A549 (cell line): ENCODE measurements at regions of chr1 and their contacts with region 1.

Region 1: DNA sequence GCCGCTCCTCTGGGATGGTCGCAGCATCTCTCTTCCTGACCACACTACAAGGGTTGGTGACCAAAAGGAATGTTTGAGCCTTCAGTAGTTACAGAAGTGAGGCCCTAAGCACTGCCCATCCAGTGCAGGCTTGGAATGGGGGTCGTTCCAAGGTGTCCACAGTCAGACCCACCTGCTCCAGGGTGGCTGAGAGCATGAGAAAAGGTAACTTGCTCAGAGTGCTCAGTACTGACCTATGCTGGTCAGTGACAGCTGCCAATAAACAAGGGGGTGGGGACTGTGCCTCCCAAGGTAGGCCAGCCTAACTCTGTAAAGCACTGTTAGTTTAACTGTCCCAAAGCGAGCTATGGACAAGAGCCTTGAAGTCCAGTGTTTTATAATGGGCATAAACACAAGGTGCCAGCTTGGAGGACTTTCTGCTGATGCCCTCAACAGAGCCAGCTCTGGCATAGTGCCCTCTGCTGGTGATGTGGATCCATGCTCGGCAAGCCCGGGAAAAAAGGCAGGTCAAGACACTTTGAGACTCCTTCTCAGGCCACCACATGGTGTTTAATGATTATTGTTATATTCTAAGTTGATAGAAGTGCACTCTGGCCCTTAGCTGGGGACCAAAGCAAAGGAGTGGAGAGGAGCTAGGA is 78.1 kb upstream of the DNAH14 start:
- DNase-seq: peak; percentile 52 to 55
- ATAC-seq: peak; percentile 72 to 90
- H3K4me3 ChIP-seq: no peak overlapping the region
- H3K27ac ChIP-seq: no peak overlapping the region
- H3K4me1 ChIP-seq: no peaks in the 10 kb centered on the region
- CTCF ChIP-seq: peak; percentile 65
- EP300 ChIP-seq: no peak
- POLR2A ChIP-seq: no peak
- RAD21 ChIP-seq: peak; percentile 37 to 49; a peak in 4 of 5 replicates

Region 2: GRCh38 chr1:224801761-224802490 is 49.4 kb before region 1 on chr1:
- CTCF ChIA-PET with region 1: interaction called, 11 read pairs
- POLR2A ChIA-PET with region 1: no interaction called
- DNase-seq: no peak
- ATAC-seq: no peak
- H3K4me3 ChIP-seq: no peak overlapping the region
- H3K27ac ChIP-seq: no peak overlapping the region
- H3K4me1 ChIP-seq: no peaks in the 10 kb centered on the region
- CTCF ChIP-seq: no peak
- EP300 ChIP-seq: no peak
- POLR2A ChIP-seq: no peak
- RAD21 ChIP-seq: no peak

Region 3: DNA sequence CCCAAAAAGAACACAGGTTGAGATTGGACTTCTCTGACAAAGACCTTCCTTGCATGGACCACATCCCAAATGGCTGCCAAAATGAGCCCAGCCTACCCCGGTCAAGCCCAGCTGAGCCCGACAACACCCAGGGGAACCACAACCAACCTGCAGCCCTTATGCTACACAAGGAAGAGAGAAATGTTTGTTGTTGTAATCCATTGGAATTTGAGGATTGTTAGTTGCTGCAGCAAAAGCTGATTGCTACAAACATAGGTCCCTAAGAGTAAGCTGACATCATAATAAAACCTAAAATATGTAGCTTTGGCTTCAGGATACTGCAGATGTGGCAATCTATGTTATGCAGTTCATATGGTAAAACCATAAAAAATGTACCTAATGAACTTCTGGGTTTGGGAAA is 12.6 kb after region 1 on chr1:
- CTCF ChIA-PET with region 1: interaction called, 22 read pairs
- POLR2A ChIA-PET with region 1: no interaction called
- DNase-seq: no peak
- ATAC-seq: no peak
- H3K4me3 ChIP-seq: no peak overlapping the region
- H3K27ac ChIP-seq: no peak overlapping the region
- H3K4me1 ChIP-seq: no peaks in the 10 kb centered on the region
- CTCF ChIP-seq: no peak
- EP300 ChIP-seq: no peak
- POLR2A ChIP-seq: no peak
- RAD21 ChIP-seq: no peak

Region 4: DNA sequence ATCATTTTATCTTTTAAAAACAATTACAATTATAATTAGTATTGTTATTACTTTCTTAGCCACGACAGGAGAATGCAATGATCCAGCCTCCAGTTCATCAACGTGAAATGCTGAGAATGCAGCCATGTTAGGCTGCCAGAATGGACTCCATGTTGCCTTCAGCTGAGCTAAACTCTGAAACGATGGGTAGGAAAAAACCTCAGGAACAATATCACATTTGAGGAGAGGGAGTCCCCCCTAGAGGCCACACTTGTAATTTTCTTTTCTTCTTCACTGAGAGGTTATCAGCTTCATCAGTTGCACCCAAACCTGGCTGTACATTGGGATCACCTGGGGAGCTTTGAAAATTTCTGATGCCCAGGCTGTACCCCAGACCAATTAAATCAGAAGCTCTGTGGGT is 43.6 kb after region 1 on chr1:
- CTCF ChIA-PET with region 1: interaction called, 26 read pairs
- POLR2A ChIA-PET with region 1: no interaction called
- DNase-seq: peak; percentile 9 to 35
- ATAC-seq: peak in 1 of 2 experiments; percentile 78; a peak in 3 of 6 replicates
- H3K4me3 ChIP-seq: no peak overlapping the region
- H3K27ac ChIP-seq: no peak overlapping the region
- H3K4me1 ChIP-seq: no peaks in the 10 kb centered on the region
- CTCF ChIP-seq: peak; percentile 35; the same call in 1 of the 3 replicates
- EP300 ChIP-seq: no peak
- POLR2A ChIP-seq: no peak
- RAD21 ChIP-seq: peak; percentile 33 to 40; a peak in 4 of 5 replicates

Region 5: DNA sequence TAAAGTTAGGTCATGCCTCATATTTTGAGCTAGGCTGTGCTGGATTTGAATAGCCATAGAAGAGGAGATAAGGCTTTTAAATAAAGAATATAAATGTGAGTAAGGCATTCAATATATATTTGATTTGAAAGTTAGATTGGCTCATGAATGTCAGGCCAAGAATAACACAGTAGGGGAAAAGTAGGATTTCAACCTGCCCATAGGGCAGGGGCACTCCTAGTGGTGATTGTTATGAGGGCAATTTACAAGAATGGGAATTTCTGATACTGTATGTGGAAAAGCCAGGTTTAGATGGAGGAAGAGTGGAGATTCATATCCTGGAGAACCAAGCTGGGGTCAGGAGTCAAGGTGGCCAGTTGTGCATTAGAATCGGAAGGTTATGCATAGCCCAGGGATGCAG is 153.1 kb after region 1 on chr1:
- CTCF ChIA-PET with region 1: no interaction called
- POLR2A ChIA-PET with region 1: no interaction called
- DNase-seq: peak; percentile 1 to 14
- ATAC-seq: peak; percentile 74 to 84; a peak in 5 of 6 replicates
- H3K4me3 ChIP-seq: no peak overlapping the region
- H3K27ac ChIP-seq: no peak overlapping the region
- H3K4me1 ChIP-seq: no peaks in the 10 kb centered on the region
- CTCF ChIP-seq: peak; percentile 15; the same call in 1 of the 3 replicates
- EP300 ChIP-seq: no peak
- POLR2A ChIP-seq: no peak
- RAD21 ChIP-seq: peak in 1 of 2 experiments; percentile 24; a peak in 1 of 5 replicates